ENCODE measurements at regions of chr9 and their contacts with region 1.

Region 1: GRCh38 chr9:110895147-110895905 is 142.9 kb downstream of the LPAR1 start:
- DNase-seq: no peak
- H3K4me3 ChIP-seq: no peak overlapping the region
- H3K27ac ChIP-seq: no peak overlapping the region
- H3K4me1 ChIP-seq: no peaks in the 10 kb centered on the region
- CTCF ChIP-seq: no peak

Region 2: GRCh38 chr9:109972026-109972882 is 923.1 kb before region 1 on chr9:
- CTCF ChIA-PET with region 1: no interaction called
- POLR2A ChIA-PET with region 1: no interaction called
- intact Hi-C with region 1: no loop called
- DNase-seq: peak; percentile 94
- H3K4me3 ChIP-seq: peak overlapping the region; percentile 37
- H3K27ac ChIP-seq: peak overlapping the region; percentile 98
- H3K4me1 ChIP-seq: peaks cover 100% of the 10 kb centered on the region
- CTCF ChIP-seq: peak; percentile 87

Region 3: DNA sequence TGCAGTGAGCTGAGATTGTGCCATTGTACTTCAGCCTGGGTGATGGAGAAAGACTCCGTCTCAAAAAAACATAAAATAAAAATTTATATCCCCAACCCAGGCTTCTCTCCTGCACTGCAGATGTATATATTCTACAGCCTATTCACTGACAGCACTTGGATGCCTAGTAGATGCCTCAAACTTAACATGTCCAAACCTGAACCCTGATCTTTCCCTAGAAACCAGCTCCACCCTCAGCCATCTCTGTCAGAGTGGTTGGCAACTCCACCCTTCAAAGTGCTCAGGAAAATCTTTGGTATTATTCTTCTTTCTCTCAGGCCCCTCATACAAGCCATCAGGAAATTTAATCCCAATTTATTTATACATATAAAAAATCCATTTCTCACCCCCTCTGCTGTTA is 602.1 kb before region 1 on chr9:
- CTCF ChIA-PET with region 1: no interaction called
- POLR2A ChIA-PET with region 1: no interaction called
- intact Hi-C with region 1: no loop called
- DNase-seq: no peak
- H3K4me3 ChIP-seq: no peak overlapping the region
- H3K27ac ChIP-seq: no peak overlapping the region
- H3K4me1 ChIP-seq: no peaks in the 10 kb centered on the region
- CTCF ChIP-seq: no peak

Region 4: DNA sequence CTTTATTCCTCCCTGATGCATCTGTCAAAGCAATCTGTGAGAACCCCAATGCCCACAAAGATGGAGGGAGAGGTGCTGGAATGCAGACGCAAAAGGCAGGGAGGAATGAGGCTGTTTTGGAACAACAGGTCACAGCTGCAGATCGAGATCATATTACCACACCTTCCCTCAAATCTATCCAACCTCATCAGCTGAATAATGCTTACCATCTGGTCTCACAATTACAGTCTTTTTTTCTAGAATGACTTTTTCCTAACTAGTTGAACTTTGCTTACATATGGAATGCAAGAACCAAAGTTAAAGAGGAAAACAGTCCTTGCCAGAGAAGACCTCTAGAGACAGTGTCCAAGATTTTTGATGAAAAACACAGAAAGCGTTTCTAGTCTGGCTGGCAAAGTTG is 15.1 kb before region 1 on chr9:
- CTCF ChIA-PET with region 1: interaction called, 10 read pairs
- POLR2A ChIA-PET with region 1: no interaction called
- intact Hi-C with region 1: no loop called
- DNase-seq: no peak
- H3K4me3 ChIP-seq: no peak overlapping the region
- H3K27ac ChIP-seq: no peak overlapping the region
- H3K4me1 ChIP-seq: no peaks in the 10 kb centered on the region
- CTCF ChIP-seq: no peak

Region 5: DNA sequence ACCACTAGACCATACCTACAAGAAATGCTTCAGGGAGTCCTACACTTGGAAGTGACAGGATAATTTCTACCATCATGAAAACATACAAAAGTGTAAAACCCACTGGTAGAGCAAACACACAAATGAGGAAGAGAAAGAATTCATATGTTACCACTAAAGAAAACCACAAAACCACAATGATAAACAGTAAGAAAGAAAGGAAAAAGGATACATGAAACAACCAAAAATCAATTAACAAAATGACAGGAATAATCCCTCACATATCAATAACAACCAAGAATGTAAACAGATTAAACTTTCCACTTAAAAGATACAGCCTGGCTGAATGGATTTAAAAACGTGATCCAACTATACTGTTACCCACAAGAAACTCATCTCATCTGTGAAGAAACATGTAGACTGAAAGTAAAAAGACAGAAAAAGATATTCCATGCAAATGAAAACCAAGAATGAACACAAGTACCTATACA is 59.5 kb after region 1 on chr9:
- CTCF ChIA-PET with region 1: no interaction called
- POLR2A ChIA-PET with region 1: no interaction called
- intact Hi-C with region 1: loop called (anchors 10 kb)
- DNase-seq: no peak
- H3K4me3 ChIP-seq: no peak overlapping the region
- H3K27ac ChIP-seq: no peak overlapping the region
- H3K4me1 ChIP-seq: no peaks in the 10 kb centered on the region
- CTCF ChIP-seq: no peak